ENCODE measurements at regions of chr12 and their contacts with region 1.

Region 1: DNA sequence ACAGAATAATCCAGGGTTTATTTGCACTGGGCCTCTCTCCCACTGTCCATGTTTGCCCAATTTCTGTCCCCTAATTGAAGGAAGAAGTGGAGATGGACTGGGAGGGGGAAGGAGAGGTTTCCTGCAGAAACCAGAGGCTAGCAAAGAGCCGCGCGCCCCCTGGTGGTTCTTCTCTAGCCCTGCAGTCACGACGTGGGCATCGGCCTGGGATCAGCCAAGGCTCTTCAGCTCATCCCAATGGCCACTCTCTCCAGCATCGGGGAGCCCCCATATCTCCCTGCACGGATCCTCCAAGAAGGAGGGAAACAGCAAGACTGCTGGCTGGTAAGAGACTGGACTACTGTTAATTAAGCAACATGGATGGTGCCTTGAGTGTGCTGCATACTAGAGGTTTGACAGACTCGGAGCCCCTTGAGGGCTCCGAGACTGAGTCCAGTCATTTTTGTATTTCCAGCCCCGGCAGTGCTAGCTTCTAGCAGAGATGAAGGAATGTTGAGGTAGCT is 18.7 kb downstream of the ZBTB39 start:
- DNase-seq: peak; percentile 90
- ATAC-seq: peak; percentile 96
- H3K4me3 Mint-ChIP-seq: no peak overlapping the region
- H3K27ac Mint-ChIP-seq: no peak overlapping the region
- H3K4me1 Mint-ChIP-seq: peaks cover 17% of the 10 kb centered on the region
- H3K27me3 Mint-ChIP-seq: no peaks in the 10 kb centered on the region; the same call in 1 of the 2 replicates
- CTCF ChIP-seq: peak; percentile 96

Region 2: GRCh38 chr12:56751712-56752598 is 235.6 kb before region 1 on chr12 and contains the start of gene PRIM1:
- CTCF ChIA-PET with region 1: interaction called, 14 read pairs
- POLR2A ChIA-PET with region 1: interaction called, 3 read pairs
- DNase-seq: peak; percentile 89
- ATAC-seq: peak; percentile 86
- H3K4me3 Mint-ChIP-seq: peak within 1 kb of the TSS; percentile 92
- H3K27ac Mint-ChIP-seq: peak within 1 kb of the TSS; percentile 98
- H3K4me1 Mint-ChIP-seq: peaks cover 17% of the 10 kb centered on the region
- H3K27me3 Mint-ChIP-seq: peaks cover 2% of the 10 kb centered on the region; the same call in 1 of the 2 replicates
- CTCF ChIP-seq: no peak
- total RNA-seq, gene PRIM1: 51.7 to 54.5 TPM (median 54.0 TPM) in 3 replicates

Region 3: DNA sequence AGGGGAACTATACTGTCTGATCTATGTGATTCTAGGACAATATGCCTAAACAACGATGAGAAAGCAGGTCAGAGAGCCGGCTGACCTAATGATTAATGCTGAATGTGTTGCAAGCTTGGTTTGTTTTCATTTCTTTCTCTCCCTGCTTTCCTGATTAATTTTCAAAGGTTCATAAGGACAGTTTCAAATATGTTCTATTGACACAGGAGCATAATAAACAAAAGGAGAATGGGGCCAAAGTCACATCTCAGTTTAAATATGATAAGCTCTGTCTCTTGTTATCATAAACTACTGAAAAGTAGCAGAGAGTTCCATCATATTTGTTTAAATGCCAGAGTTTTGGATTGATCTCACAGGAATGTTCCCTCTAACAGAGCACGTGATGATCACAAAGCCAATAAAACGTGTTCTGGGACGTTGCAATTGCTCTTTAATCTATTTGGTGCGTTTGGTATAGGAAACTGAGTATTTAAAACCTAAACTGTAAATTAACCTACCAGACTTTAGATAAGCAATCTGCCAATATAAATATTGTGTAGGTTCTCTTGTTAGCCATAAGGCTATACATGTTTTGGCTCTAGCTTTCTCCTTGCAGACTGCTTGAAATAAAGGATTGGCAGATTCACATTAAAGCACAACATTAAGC is 228.2 kb before region 1 on chr12:
- CTCF ChIA-PET with region 1: interaction called, 28 read pairs
- POLR2A ChIA-PET with region 1: no interaction called
- DNase-seq: no peak
- ATAC-seq: no peak
- H3K4me3 Mint-ChIP-seq: no peak overlapping the region
- H3K27ac Mint-ChIP-seq: no peak overlapping the region
- H3K4me1 Mint-ChIP-seq: peaks cover 4% of the 10 kb centered on the region
- H3K27me3 Mint-ChIP-seq: peaks cover 5% of the 10 kb centered on the region
- CTCF ChIP-seq: no peak

Region 4: DNA sequence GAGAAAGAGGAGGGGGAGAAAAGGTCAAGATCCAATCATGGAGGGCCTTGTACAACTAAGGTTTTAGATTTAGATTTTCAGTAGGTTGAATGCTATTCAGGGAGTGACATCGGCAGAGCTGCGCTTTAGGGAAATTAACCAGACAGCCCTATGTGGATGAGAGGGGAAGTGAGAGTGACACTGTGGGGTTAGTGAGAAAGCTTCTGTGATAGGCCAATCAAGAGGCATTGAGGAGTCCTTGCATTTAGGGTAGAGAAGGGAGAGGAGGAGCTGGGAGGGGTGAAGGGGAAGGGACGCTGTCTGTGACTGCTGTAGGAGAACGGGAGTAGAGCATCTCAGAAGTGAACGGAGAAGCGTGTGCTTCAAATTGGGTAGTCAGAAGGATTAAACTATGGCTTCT is 221.1 kb before region 1 on chr12:
- CTCF ChIA-PET with region 1: interaction called, 28 read pairs
- POLR2A ChIA-PET with region 1: no interaction called
- DNase-seq: no peak
- ATAC-seq: peak; percentile 34
- H3K4me3 Mint-ChIP-seq: no peak overlapping the region
- H3K27ac Mint-ChIP-seq: peak overlapping the region; percentile 9
- H3K4me1 Mint-ChIP-seq: peaks cover 28% of the 10 kb centered on the region
- H3K27me3 Mint-ChIP-seq: no peaks in the 10 kb centered on the region
- CTCF ChIP-seq: no peak

Region 5: DNA sequence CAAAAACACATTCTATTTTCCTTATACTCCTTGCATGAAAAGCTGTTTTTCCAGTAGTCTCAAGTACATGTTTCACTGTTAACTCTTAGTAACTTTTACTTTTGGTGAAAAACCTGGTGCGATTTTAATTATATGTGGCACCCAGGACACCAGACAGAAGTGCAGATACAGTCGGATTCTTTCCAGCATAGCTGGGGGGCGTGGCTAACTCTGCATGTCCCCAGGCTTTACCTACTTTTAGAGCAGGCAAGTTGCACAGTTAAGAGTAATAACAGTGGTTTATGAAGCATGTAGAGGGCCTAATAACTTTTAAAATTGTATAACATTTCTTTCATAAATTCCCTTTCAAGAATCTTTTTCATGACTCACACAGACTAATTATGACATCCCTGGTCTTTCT is 153.8 kb before region 1 on chr12:
- CTCF ChIA-PET with region 1: interaction called, 11 read pairs
- POLR2A ChIA-PET with region 1: no interaction called
- DNase-seq: no peak
- ATAC-seq: no peak
- H3K4me3 Mint-ChIP-seq: no peak overlapping the region
- H3K27ac Mint-ChIP-seq: no peak overlapping the region
- H3K4me1 Mint-ChIP-seq: no peaks in the 10 kb centered on the region
- H3K27me3 Mint-ChIP-seq: peaks cover 13% of the 10 kb centered on the region
- CTCF ChIP-seq: no peak

Region 6: DNA sequence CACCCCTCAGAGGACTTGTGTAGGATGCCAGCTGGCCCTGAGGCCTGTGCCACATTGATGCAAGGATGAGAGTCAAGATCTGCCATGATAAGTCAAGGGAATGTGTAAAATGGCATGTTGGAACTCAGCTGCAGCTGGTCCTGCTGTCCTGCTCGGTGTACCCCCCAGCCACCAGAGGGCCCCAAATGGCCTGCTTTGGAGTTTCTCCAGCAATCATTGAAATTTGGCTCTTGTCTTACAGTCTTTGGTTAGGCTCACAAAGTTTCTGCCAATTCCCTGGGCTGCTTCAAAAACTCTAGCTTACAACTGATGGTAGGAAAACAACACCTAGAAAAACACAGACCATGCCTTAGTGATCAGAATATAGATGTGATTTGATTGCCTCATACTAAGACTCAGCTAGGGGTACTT is 147.7 kb before region 1 on chr12:
- CTCF ChIA-PET with region 1: interaction called, 64 read pairs
- POLR2A ChIA-PET with region 1: no interaction called
- DNase-seq: peak; percentile 78
- ATAC-seq: peak; percentile 91
- H3K4me3 Mint-ChIP-seq: no peak overlapping the region
- H3K27ac Mint-ChIP-seq: no peak overlapping the region
- H3K4me1 Mint-ChIP-seq: no peaks in the 10 kb centered on the region
- H3K27me3 Mint-ChIP-seq: peaks cover 12% of the 10 kb centered on the region
- CTCF ChIP-seq: peak; percentile 22; the same call in 1 of the 2 replicates

Region 7: DNA sequence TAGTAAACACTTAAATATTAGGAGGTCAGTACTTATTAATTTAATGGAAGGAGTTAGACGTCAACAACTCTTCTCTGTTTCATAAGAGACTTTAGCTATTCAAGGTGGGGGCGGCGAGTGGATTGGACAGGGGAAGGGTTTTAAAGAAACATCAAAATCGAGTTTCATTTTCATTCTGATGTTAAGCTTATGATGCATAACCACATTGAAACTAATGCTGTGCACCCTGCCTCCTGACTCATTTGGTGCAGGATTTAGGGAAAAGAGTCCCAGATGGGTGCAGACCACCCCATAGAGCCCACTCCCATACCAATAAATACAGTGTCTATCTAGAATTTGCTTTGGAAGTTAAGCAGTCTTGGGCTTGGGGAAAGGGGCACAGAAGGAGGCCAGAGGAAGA is 11.4 kb after region 1 on chr12:
- CTCF ChIA-PET with region 1: interaction called, 52 read pairs
- POLR2A ChIA-PET with region 1: no interaction called
- DNase-seq: no peak
- ATAC-seq: no peak
- H3K4me3 Mint-ChIP-seq: no peak overlapping the region
- H3K27ac Mint-ChIP-seq: no peak overlapping the region
- H3K4me1 Mint-ChIP-seq: peaks cover 5% of the 10 kb centered on the region; the same call in 1 of the 2 replicates
- H3K27me3 Mint-ChIP-seq: no peaks in the 10 kb centered on the region
- CTCF ChIP-seq: no peak

Region 8: DNA sequence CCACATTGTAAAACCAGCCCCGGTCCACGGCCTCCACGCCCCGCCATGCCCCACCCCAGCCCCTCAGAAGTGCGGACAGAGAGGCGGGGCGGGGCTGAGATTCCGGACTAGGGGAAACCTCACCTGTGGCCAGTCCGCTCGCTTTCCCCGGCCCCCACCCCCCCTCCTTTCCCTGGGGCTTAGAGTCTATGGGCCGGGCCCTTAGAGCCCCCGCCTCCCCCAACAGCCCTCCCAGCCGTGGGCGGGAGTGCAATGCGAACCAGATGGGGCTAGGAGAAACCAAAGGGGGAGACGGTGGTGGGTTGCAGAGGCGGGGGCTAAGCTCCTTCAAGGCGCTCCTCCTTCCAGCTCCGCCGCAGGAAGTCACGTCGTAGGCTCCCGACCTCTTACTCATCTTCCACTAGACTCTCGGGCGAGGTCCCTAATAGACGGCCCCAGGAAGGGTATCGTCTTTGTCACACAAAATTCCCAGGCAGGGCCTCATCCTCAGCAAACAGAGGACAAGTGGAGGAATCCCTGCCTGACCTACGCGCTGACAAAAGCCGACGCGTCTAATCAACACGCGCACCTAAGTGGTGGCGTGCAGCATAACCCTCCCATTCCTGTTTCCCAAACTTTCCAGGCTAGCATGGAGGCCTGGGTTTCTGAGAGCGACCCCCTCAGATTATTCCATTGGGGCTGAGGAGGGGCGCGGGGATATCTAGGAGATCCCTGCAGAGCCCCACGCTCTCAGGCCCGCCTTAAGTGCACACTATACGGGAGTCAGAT is 100.3 kb after region 1 on chr12:
- CTCF ChIA-PET with region 1: no interaction called
- POLR2A ChIA-PET with region 1: no interaction called
- DNase-seq: peak; percentile 90
- ATAC-seq: peak; percentile 67
- H3K4me3 Mint-ChIP-seq: peak overlapping the region; percentile 85
- H3K27ac Mint-ChIP-seq: peak overlapping the region; percentile 100
- H3K4me1 Mint-ChIP-seq: peaks cover 34% of the 10 kb centered on the region
- H3K27me3 Mint-ChIP-seq: no peaks in the 10 kb centered on the region; the same call in 1 of the 2 replicates
- CTCF ChIP-seq: no peak

Region 9: DNA sequence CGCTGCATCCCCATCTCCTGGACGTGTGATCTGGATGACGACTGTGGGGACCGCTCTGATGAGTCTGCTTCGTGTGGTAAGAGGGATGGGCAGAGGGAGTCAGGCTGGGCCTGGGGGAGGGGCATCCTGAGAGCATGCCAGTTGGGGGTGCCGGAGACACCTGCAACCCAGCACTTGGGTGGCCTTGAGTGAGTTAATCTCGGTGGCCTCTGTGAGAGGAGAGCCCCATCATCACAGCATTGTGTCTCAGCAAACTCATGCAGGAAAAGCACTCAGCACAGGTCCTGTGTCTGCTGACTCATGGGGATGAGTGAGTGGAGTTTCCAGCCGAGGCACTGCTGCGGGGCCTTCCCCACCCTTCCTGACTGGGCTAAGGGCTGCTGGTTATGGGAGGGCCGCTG is 179.4 kb after region 1 on chr12:
- CTCF ChIA-PET with region 1: no interaction called
- POLR2A ChIA-PET with region 1: no interaction called
- DNase-seq: no peak
- ATAC-seq: no peak
- H3K4me3 Mint-ChIP-seq: no peak overlapping the region
- H3K27ac Mint-ChIP-seq: no peak overlapping the region
- H3K4me1 Mint-ChIP-seq: no peaks in the 10 kb centered on the region
- H3K27me3 Mint-ChIP-seq: no peaks in the 10 kb centered on the region
- CTCF ChIP-seq: no peak

Measured in WTC11 (cell line).